ENCODE measurements at regions of chr10 and their contacts with region 1.

Region 1: DNA sequence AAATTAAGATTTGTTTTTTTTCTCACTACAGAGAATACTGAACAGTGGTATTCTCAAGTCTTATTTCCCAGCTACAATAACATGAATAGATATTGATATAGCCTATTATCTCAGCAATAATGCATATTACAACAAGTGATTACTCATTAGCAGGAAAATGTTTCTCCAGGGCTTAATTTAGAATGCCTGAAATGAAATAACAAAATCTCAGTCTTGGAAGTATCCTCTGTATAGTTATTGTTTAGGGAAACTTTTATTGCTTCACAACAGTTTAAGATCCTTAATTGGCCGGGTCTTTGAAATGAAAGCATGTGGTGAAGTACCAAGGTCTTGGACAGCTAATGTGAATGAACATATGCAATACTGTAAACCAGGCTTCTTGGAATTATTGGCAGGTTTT is 79.1 kb upstream of the ZEB1 start:
- DNase-seq: no peak
- H3K4me3 Mint-ChIP-seq: no peak overlapping the region
- H3K27ac Mint-ChIP-seq: no peak overlapping the region
- H3K4me1 Mint-ChIP-seq: peaks cover 17% of the 10 kb centered on the region
- H3K27me3 Mint-ChIP-seq: no peaks in the 10 kb centered on the region
- CTCF ChIP-seq: no peak

Region 2: DNA sequence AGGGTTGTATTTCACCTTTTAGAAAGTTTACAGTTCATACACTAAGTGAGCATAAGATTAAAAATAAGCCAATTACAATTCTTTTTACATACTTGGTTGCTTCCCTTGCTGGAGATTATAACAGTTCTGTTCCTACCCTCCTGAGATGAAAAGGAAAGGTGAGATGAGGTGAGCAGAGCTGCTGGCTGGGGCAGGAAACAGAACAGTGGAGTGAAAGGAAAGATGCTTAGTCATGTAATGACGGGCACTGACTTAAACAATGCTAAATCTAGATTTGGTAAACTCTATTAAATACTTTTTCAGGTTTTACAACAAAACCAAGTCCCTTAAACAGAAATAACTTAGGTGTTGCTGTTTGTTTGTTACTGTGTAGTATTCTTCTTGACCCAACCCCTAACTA is 59.2 kb after region 1 on chr10:
- CTCF ChIA-PET with region 1: no interaction called
- intact Hi-C with region 1: loop called (anchors 10 kb)
- DNase-seq: no peak
- H3K4me3 Mint-ChIP-seq: no peak overlapping the region
- H3K27ac Mint-ChIP-seq: no peak overlapping the region
- H3K4me1 Mint-ChIP-seq: no peaks in the 10 kb centered on the region
- H3K27me3 Mint-ChIP-seq: no peaks in the 10 kb centered on the region
- CTCF ChIP-seq: no peak

Measured in Calu3 (cell line).